GM10248 (cell line): ENCODE measurements at regions of chr3 and their contacts with region 1.

Region 1: GRCh38 chr3:37272743-37273142 is 98.4 kb upstream of the LRRFIP2 start:
- DNase-seq: no peak
- CTCF ChIP-seq: no peak

Region 2: DNA sequence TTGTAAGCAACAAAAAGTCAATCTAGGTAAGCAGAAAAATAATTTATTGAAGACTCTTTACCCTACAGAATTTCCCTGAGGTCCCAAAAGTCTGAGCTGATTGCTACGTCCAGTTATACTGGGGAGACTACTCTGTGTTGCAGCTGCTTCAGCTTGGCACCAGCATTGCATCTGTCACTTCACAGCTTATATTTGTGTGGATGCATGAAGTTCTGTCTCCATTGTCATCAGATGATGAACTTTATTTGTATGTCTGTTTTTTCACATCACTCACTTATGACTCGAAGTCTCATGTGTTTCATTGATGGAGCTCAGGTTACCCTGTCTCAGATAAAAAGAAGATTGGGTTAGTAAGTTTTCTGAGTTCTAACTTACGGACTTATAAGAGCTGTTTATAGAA is 23.0 kb before region 1 on chr3:
- CTCF ChIA-PET with region 1: interaction called, 6 read pairs
- POLR2A ChIA-PET with region 1: interaction called, 11 read pairs
- DNase-seq: no peak
- CTCF ChIP-seq: no peak

Region 3: GRCh38 chr3:37367436-37367835 is 94.7 kb after region 1 on chr3:
- CTCF ChIA-PET with region 1: no interaction called
- POLR2A ChIA-PET with region 1: no interaction called
- DNase-seq: no peak
- CTCF ChIP-seq: no peak